Heart right ventricle (tissue), 16 donors: ENCODE measurements at regions of chr1 and their contacts with region 1.

Region 1: GRCh38 chr1:32773018-32773763 is 44.0 kb downstream of the YARS1 start:
- DNase-seq: peak; percentile 77 to 83
- ATAC-seq: peak; percentile 80 to 93 (median 90)
- H3K4me3 ChIP-seq: no peak overlapping the region
- H3K27ac ChIP-seq: no peak overlapping the region
- H3K4me1 ChIP-seq: peaks cover 0 to 7% (median 5%) of the 10 kb centered on the region in 9 donors
- H3K27me3 ChIP-seq: no peaks in the 10 kb centered on the region
- CTCF ChIP-seq: peak; percentile 87 to 96 (median 94)

Region 2: GRCh38 chr1:32400876-32401631 is 372.1 kb before region 1 on chr1:
- intact Hi-C with region 1: loop called in 3 of 10 experiments (anchors 5 to 10 kb)
- DNase-seq: peak; percentile 85 to 87
- ATAC-seq: peak; percentile 94 to 99 (median 97)
- H3K4me3 ChIP-seq: no peak overlapping the region
- H3K27ac ChIP-seq: peak overlapping the region in 5 of 10 donors; percentile 47 to 70 (median 64)
- H3K4me1 ChIP-seq: peaks cover 0 to 8% (median 0%) of the 10 kb centered on the region in 9 donors
- H3K27me3 ChIP-seq: no peaks in the 10 kb centered on the region
- CTCF ChIP-seq: peak; percentile 85 to 93 (median 90)

Region 3: DNA sequence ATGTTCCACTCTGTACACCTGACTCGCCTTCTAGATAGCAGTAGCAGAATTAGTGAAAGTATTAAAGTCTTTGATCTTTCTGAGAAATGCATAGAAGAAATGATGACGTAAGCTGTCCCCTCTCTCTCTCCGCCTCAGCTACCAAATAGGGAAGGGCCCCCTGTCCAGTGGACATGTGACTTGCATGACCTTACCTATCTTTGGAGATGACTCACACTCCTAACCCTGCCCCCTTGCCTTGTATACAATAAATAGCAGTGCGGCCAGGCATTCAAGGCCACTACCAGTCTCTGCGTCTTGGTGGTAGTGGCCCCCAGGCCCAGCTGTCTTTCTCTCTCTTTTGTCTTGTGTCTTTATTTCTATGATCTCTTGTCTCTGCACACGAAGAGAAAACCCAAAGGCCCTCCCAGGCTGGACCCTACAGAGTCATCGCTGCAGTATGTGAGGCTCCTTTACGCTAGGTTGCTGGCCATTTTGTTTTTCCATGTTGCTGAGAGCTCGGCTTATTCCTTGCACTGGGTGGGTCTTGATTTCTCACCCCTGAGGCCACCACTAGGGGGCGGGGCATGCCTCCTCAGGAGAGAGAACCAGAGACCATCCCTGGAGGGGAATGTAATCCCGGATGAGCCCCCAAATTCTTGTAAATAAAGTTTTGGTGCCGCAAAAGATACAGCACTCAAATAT is 324.3 kb before region 1 on chr1:
- intact Hi-C with region 1: loop called in 1 of 10 experiments (anchors 5 kb)
- DNase-seq: no peak
- ATAC-seq: no peak
- H3K4me3 ChIP-seq: no peak overlapping the region
- H3K27ac ChIP-seq: no peak overlapping the region
- H3K4me1 ChIP-seq: peaks cover 0 to 6% (median 0%) of the 10 kb centered on the region in 9 donors
- H3K27me3 ChIP-seq: peaks cover 0 to 10% (median 0%) of the 10 kb centered on the region in 7 donors
- CTCF ChIP-seq: no peak

Region 4: DNA sequence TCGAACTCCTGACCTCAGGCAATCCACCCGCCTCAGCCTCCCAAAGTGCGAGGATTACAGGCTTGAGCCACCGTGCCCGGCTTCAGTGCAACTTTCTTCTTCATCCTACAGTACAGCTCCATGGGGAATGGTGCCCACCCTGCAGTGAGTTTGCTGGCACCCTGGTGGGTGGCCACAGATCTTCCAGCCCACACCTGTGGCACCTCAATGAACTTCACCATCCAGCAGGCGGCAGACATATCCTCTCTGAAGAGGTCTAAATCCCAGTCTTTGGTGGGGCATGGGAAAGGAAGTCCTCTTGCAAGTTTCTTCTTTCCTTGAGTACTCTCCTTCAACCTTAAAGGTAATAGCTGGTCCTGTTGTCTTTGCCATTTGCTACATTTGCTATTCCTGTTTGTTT is 252.0 kb before region 1 on chr1:
- intact Hi-C with region 1: loop called in 4 of 10 experiments (anchors 5 to 10 kb)
- DNase-seq: no peak
- ATAC-seq: no peak
- H3K4me3 ChIP-seq: peak overlapping the region in 3 of 10 donors; percentile 41 to 46 (median 45)
- H3K27ac ChIP-seq: no peak overlapping the region
- H3K4me1 ChIP-seq: peaks cover 0 to 10% (median 0%) of the 10 kb centered on the region in 9 donors
- H3K27me3 ChIP-seq: no peaks in the 10 kb centered on the region
- CTCF ChIP-seq: no peak

Region 5: DNA sequence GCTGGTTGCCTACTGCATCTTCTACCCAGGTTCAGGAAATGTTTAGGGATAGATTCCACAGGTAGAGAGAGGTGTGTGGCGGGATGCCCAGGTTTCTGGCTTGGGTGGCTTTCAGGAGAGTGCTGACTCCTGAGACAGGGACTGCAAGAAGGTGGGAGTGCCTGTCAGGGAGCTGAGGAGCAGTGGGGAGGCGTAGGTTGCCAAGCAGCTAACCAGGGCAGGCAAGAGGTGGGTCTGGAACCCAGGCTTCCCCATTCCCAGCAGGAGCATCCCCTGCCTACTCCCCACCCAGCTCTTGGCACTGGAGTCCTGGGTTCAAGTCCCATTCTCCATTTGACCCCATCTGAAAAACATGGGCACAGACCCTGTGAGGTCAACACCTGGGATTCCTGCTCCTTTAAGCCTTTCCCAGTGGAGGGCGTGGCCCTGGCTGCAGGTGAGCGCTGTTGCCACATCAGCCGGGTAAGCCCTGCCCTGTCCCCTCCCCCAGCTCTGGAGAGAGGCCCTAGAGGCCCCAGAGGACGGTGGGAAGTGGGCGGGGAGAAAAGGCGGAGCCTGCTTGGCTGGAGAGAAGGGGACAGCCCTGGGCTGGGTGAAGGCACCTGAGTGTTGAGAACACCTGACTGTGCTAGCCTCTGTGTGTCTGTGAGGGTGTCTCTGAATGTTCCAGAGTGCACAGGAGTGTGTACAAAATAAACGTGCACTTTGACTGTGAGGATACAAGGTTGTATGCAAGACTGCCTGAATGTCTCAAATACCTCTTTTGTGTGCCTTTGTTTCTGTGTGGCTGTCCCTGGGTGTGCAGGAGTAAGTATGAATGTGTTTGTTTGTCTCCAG is 56.7 kb before region 1 on chr1:
- intact Hi-C with region 1: loop called (anchors 1 to 5 kb)
- DNase-seq: peak in 1 of 2 donors; percentile 57
- ATAC-seq: peak; percentile 40 to 78 (median 56)
- H3K4me3 ChIP-seq: no peak overlapping the region
- H3K27ac ChIP-seq: no peak overlapping the region
- H3K4me1 ChIP-seq: peaks cover 0 to 9% (median 0%) of the 10 kb centered on the region in 9 donors
- H3K27me3 ChIP-seq: no peaks in the 10 kb centered on the region
- CTCF ChIP-seq: no peak

Region 6: DNA sequence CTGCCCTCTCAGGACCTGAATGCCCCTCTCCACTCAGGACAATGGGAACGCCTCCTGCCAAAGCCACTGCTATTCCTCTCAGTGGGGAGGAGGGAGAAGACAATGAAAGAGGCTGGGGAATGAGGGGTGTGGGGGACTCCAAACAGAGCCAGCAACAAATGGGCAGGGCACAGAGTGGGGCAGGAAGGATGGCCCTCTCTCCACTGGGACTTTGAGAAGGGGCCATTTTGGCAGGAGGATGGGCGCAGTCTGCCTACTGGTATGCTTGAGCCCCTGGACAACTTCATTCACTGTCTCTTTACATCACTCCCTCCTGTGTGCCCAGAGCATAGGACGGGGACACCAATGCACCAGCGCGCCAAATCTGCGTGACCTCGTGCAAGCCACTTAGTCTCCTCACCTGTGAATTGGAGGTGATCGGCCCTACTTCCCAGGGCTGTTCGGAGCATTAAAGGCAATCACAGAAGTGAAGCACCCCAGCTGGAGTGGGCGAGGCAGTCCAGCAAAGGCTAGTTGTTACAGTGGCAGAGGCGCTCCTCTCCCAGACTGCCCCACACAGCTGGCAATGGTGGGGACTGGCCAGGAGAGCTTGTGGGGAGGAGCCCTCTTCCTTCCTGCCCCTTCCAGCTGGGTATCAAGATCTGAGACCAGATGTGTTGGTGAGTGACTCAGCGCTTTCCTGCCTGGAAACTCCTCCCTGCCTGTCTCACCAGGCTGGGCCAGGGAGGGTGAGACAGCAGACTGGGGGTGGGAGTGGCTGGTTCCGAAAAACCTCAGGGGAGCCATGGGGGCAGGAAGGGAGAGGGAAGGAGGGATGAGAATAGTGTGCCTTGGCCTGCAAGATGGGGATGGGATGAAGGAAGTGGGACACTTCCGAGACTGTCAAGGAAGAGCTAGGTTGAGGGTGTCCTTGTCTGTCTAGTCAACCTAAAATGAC is 48.2 kb before region 1 on chr1:
- intact Hi-C with region 1: loop called in 1 of 10 experiments (anchors 5 kb)
- DNase-seq: peak; percentile 37 to 43
- ATAC-seq: peak; percentile 71 to 97 (median 84)
- H3K4me3 ChIP-seq: no peak overlapping the region
- H3K27ac ChIP-seq: peak overlapping the region in 3 of 10 donors; percentile 38 to 44 (median 41)
- H3K4me1 ChIP-seq: peaks cover 6 to 17% (median 12%) of the 10 kb centered on the region in 9 donors
- H3K27me3 ChIP-seq: no peaks in the 10 kb centered on the region
- CTCF ChIP-seq: no peak